HepG2 (cell line): ENCODE measurements at regions of chr2 and their contacts with region 1.

Region 1: DNA sequence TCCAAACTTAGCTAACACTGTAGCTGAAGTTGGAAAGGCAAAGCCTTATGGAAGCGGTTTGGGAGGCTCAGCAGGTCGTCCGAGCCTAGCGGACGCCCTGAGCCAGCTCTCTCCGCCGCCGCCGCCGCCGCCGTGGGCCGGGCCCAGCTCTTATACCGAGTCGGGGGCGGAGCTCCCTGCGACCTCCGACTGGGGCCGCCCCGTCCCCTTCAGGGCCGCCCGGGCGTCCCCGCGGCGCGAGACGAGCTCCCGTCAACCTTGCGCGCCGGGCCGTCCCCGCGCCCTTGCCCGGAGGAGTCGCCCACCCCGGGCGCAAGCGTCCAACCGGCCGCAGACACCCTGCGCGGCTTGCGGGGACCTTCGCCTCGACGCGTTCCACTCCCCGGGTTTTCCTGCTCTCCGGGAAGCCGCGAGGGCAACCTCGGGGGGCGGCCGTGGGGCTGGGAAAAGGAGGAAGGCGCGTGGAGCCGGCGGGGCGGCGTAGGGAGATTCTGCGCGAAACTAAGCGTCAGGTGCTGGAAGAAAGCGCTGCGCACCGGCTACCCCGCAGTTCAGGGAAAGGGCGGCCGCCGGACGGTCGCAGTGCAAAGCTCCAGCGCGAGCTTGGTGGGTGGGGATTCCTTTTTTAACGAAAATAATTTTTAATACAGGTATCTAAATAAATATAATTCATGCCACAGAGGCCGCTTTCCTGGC is at the start of gene SLC40A1:
- DNase-seq: peak; percentile 67
- ATAC-seq: peak; percentile 96
- H3K4me3 ChIP-seq: peak within 1 kb of the TSS; percentile 64 to 78 (median 77)
- H3K27ac ChIP-seq: peak within 1 kb of the TSS; percentile 56
- H3K4me1 ChIP-seq: peaks cover 66% of the 10 kb centered on the region
- H3K27me3 ChIP-seq: peaks cover 0 to 11% of the 10 kb centered on the region in 2 experiments; a peak in 2 of 5 replicates
- CTCF ChIP-seq: no peak
- EP300 ChIP-seq: no peak
- POLR2A ChIP-seq: peak; percentile 73 to 91
- RAD21 ChIP-seq: peak; percentile 72
- total RNA-seq, gene SLC40A1: 10.6 and 19.2 TPM in 2 replicates

Region 2: DNA sequence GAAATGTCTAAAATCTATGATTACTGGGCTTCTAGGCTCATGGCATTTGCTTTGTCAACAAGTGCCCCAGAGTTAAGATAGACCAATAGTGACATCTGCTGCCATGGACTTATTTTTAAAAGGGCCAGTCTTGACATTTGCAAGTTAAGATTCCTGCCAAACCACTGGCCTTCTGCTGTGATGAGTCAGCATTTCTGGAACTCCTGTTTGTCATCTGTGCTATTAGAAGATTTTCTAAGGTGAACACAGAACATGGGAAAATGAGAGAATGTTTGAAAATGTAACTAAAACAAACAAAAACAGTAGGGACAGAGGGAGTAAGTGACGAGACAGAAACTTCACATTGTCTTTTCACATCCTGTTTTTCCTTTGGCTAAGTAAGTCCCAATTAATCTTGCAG is 233.3 kb before region 1 on chr2:
- CTCF ChIA-PET with region 1: no interaction called
- POLR2A ChIA-PET with region 1: no interaction called
- in situ Hi-C with region 1: no loop called
- intact Hi-C with region 1: no loop called
- DNase-seq: peak; percentile 56
- ATAC-seq: peak; percentile 69
- H3K4me3 ChIP-seq: no peak overlapping the region
- H3K27ac ChIP-seq: no peak overlapping the region
- H3K4me1 ChIP-seq: no peaks in the 10 kb centered on the region
- H3K27me3 ChIP-seq: no peaks in the 10 kb centered on the region
- CTCF ChIP-seq: peak; percentile 57
- EP300 ChIP-seq: no peak
- POLR2A ChIP-seq: no peak
- RAD21 ChIP-seq: 0 out of 2 replicates have a peak, but pooled peaks have one; percentile 14

Region 3: DNA sequence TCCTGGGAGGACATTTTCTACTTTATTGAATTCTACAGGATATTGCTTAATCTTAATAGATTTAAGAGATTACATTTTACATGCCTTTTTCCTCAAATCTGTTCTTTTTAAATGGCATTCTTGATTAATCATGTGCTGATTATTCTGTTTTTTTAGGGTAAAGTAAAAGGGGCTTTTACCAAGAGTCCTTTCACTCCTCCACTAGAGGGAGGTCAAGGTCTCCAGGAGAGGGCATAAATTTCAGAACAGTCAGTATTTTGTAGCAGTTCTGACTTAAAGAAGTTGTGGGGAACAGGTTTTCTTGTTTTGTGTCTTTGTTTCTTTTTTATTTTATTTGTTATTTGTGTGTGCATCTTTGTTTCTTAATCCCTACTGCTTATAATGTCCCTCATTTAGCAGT is 114.1 kb before region 1 on chr2:
- CTCF ChIA-PET with region 1: no interaction called
- POLR2A ChIA-PET with region 1: interaction called, 8 read pairs
- in situ Hi-C with region 1: no loop called
- intact Hi-C with region 1: loop called (anchors 2 kb)
- DNase-seq: peak; percentile 55
- ATAC-seq: peak; percentile 78
- H3K4me3 ChIP-seq: no peak overlapping the region
- H3K27ac ChIP-seq: no peak overlapping the region
- H3K4me1 ChIP-seq: 0 out of 2 replicates have a peak, but pooled peaks cover 10% of the 10 kb centered on the region
- H3K27me3 ChIP-seq: no peaks in the 10 kb centered on the region
- CTCF ChIP-seq: peak; percentile 61
- EP300 ChIP-seq: no peak
- POLR2A ChIP-seq: no peak
- RAD21 ChIP-seq: peak; percentile 74

Region 4: DNA sequence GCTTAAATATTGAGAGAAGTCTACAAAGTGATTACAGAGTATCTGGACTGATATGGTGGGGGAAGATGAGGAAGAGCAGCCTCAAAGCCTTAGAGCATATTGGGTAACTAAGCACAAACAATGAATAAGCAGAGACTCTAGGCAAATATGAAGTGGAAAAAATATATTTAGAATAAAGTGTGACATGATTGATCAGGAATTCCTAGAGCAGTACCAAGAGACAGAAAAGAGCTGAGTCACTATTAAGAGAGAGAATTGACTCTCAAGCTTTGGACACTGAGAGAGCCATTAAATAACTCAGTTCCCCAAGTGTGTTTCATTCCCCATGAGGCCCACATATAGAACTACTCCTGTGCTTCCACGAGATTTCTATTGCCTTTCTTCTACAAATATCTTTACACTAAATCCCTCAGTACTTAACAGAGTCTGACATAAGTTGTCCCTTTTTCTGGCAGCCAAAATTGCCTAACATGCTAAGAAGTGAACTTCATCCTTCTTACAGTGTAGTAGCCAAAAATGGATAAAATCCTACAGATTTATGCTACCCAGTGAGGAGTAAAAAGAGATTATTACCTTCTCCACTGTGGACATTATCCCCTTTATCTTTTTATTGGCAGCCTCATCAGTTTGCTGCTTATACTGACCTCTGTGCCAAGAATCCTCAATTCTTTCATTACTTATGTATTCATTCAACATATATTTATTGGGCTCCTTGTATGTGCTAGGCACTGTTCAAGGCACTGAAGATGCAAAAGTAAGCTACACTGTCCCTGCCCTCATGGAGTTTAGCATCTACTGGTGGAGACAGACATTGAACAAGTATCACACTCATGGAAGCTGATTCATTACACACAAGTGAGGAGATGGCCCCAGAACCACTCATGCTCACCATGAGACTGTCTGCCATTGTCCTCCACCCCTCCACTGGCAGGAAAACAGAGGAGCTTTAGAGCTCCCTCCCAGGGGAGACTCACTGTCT is 45.7 kb before region 1 on chr2:
- CTCF ChIA-PET with region 1: no interaction called
- POLR2A ChIA-PET with region 1: interaction called, 14 read pairs
- in situ Hi-C with region 1: no loop called
- intact Hi-C with region 1: no loop called
- DNase-seq: peak; percentile 53
- ATAC-seq: peak; percentile 52
- H3K4me3 ChIP-seq: no peak overlapping the region
- H3K27ac ChIP-seq: no peak overlapping the region
- H3K4me1 ChIP-seq: peaks cover 32% of the 10 kb centered on the region
- H3K27me3 ChIP-seq: no peaks in the 10 kb centered on the region
- CTCF ChIP-seq: no peak
- EP300 ChIP-seq: peak in 1 of 2 experiments; percentile 57; a peak in 1 of 4 replicates
- POLR2A ChIP-seq: no peak
- RAD21 ChIP-seq: no peak

Region 5: DNA sequence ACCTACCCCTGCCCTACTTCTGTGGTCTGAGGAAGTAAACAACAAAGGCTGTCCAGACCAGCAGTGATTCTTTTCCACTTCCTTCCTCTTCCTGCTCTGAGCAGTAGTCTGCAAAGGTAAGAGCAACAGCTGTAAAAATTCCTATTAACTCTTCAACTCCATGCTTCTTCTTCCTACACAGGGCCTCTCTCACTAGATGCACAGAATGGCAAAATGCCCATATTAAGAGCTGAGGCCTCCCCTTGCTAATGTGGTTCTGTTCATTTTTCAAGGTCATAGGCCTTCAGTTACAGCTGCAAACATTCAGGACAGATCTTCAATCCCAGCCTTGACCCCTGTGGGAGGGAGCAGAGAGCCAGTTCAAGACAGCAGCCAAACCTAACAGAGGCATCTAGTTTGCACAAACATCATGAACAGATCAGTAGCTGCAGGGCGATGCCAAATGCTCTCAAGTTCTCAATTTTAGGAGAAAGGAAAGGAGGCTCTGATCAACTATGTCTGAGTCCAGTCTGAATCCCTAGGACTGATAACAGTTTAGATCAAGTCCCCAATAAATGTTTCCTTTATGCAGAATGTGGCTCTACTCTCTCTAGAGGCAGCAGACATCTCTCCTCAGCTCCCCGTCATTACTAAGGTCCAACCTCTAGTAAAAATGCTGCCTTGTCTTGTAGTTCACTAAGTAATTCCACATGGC is 21.1 kb before region 1 on chr2:
- CTCF ChIA-PET with region 1: no interaction called
- POLR2A ChIA-PET with region 1: interaction called, 26 read pairs
- in situ Hi-C with region 1: no loop called
- intact Hi-C with region 1: no loop called
- DNase-seq: no peak
- ATAC-seq: peak; percentile 78
- H3K4me3 ChIP-seq: no peak overlapping the region
- H3K27ac ChIP-seq: peak overlapping the region; percentile 34
- H3K4me1 ChIP-seq: peaks cover 56% of the 10 kb centered on the region
- H3K27me3 ChIP-seq: no peaks in the 10 kb centered on the region
- CTCF ChIP-seq: no peak
- EP300 ChIP-seq: no peak; a peak in 1 of 4 replicates
- POLR2A ChIP-seq: no peak
- RAD21 ChIP-seq: no peak

Region 6: DNA sequence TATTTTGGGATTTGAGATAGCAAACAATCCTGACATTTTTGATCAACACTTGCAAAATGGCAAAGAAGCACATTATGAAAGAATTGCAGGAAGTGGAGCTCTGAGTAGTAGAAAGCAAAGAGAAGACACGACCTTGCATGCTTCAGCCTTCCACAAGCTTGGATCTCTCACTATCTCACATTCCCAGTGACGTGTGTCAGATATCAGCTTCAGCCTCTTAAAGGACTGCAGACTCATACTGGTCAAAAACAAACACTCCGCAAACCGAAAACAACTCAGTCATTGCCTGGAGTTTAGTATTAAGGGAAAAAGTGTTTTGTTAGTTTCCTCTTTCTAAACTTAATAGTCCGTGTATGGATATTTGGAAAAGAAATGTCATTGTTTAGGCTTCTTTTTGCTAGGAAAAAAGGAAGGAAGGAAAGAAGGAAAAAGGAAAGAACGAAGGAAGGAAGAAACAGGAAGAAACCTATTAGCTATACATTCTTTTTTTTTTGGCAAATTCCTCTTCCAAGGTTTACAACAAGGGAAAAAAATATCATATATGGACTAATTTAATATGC is 32.4 kb after region 1 on chr2:
- CTCF ChIA-PET with region 1: no interaction called
- POLR2A ChIA-PET with region 1: interaction called, 23 read pairs
- in situ Hi-C with region 1: no loop called
- intact Hi-C with region 1: loop called (anchors 2 kb)
- DNase-seq: peak; percentile 96
- ATAC-seq: peak; percentile 94
- H3K4me3 ChIP-seq: peak overlapping the region in 2 of 3 experiments; percentile 11 to 20; a peak in 1 of 6 replicates
- H3K27ac ChIP-seq: peak overlapping the region; percentile 30
- H3K4me1 ChIP-seq: peaks cover 37% of the 10 kb centered on the region
- H3K27me3 ChIP-seq: no peaks in the 10 kb centered on the region; a peak in 1 of 5 replicates
- CTCF ChIP-seq: no peak
- EP300 ChIP-seq: peak in 1 of 2 experiments; percentile 57; a peak in 1 of 4 replicates
- POLR2A ChIP-seq: no peak
- RAD21 ChIP-seq: no peak

Region 7: GRCh38 chr2:189952536-189953109 is 371.8 kb after region 1 on chr2:
- CTCF ChIA-PET with region 1: no interaction called
- POLR2A ChIA-PET with region 1: no interaction called
- in situ Hi-C with region 1: no loop called
- intact Hi-C with region 1: no loop called
- DNase-seq: no peak
- ATAC-seq: no peak
- H3K4me3 ChIP-seq: no peak overlapping the region
- H3K27ac ChIP-seq: no peak overlapping the region
- H3K4me1 ChIP-seq: no peaks in the 10 kb centered on the region
- H3K27me3 ChIP-seq: no peaks in the 10 kb centered on the region
- CTCF ChIP-seq: no peak
- EP300 ChIP-seq: no peak
- POLR2A ChIP-seq: no peak
- RAD21 ChIP-seq: no peak